ENCODE measurements at regions of chr22 and their contacts with region 1.

Region 1: GRCh38 chr22:50200461-50201190 is at the start of gene SELENOO:
- DNase-seq: peak; percentile 87 to 90
- ATAC-seq: peak; percentile 90 to 92
- H3K4me3 ChIP-seq: peak within 1 kb of the TSS; percentile 60 to 91 (median 74)
- H3K27ac ChIP-seq: peak within 1 kb of the TSS; percentile 70 to 89 (median 82)
- H3K4me1 ChIP-seq: peaks cover 29 to 32% of the 10 kb centered on the region in 2 donors
- H3K27me3 ChIP-seq: no peaks in the 10 kb centered on the region
- CTCF ChIP-seq: no peak
- POLR2A ChIP-seq: peak; percentile 94 to 98
- total RNA-seq, gene SELENOO: 26.4 to 54.9 (median 34.0) TPM

Region 2: DNA sequence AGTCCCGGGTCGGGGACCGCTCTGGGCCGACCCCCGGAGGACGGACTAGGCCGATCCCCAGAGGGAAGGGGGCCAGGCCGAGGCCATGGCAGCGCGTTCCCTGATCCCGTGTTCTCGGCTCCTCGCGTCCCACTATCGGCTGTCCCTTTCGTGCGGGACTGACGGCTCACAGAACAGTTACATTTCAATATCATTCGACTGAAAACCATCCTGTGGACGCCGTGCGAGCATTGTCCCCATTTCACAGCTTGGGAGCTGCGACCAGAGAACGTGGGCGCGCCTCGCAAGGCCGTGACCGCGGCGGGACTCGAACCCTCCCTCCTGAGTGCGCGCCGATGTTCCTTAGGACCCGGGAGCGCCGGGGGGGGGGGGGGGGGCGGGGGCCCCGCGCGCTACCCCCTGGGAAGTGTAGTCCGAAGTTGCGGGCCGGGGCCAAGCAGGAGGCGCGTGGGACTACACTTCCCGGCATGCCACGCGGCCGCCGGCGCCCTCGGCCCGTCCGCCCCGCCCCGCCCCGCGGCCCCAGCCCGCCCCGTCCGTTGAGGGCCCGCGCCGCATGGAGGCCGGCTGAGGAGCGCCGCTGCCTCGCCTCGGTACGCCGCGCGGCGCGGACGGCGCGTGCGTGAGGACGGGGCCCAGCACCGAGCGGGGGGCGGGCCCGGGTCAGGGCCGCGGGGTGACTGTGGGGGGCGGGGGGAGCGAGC is 15.1 kb before region 1 on chr22 and contains the start of gene TRABD:
- in situ Hi-C with region 1: no loop called
- intact Hi-C with region 1: loop called (anchors 1 kb)
- DNase-seq: peak; percentile 81 to 84
- ATAC-seq: peak; percentile 80 to 82
- H3K4me3 ChIP-seq: peak within 1 kb of the TSS; percentile 71 to 87 (median 78)
- H3K27ac ChIP-seq: peak within 1 kb of the TSS; percentile 62 to 74 (median 70)
- H3K4me1 ChIP-seq: peaks cover 20 to 23% of the 10 kb centered on the region in 2 donors
- H3K27me3 ChIP-seq: no peaks in the 10 kb centered on the region
- CTCF ChIP-seq: no peak
- POLR2A ChIP-seq: no peak
- total RNA-seq, gene TRABD: 21.4 to 30.3 (median 24.5) TPM

Region 3: GRCh38 chr22:50282361-50282760 is 81.7 kb after region 1 on chr22:
- in situ Hi-C with region 1: no loop called
- intact Hi-C with region 1: no loop called
- DNase-seq: no peak
- ATAC-seq: no peak
- H3K4me3 ChIP-seq: no peak overlapping the region
- H3K27ac ChIP-seq: no peak overlapping the region
- H3K4me1 ChIP-seq: no peaks in the 10 kb centered on the region
- H3K27me3 ChIP-seq: no peaks in the 10 kb centered on the region
- CTCF ChIP-seq: no peak
- POLR2A ChIP-seq: no peak